A549 (cell line): ENCODE measurements at regions of chr19 and their contacts with region 1.

Region 1: DNA sequence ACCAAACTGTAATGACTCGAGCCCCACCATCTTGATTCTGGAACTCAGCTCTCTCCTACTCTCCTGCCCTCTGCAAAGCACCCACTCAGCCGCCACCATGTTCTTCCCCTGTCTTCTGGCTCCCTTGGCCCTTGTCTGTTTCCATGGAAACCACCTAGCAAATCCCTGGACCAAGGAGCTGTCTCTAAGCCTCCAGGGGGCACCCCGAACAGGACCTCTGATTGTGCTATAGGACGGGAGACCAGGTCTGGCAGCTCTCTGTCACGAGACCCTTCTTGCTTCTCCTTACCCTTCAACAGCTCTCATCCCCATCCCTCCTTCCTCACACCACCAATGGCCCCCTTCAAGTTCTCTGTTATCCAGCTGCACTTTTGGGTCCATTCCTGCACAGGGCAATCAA is 277.7 kb upstream of the ZNF507 start:
- DNase-seq: peak in 1 of 2 experiments; percentile 9
- ATAC-seq: peak in 1 of 2 experiments; percentile 50; a peak in 3 of 6 replicates
- H3K4me3 ChIP-seq: no peak overlapping the region
- H3K27ac ChIP-seq: no peak overlapping the region
- H3K4me1 ChIP-seq: no peaks in the 10 kb centered on the region
- CTCF ChIP-seq: no peak
- EP300 ChIP-seq: no peak
- POLR2A ChIP-seq: no peak
- RAD21 ChIP-seq: no peak

Region 2: DNA sequence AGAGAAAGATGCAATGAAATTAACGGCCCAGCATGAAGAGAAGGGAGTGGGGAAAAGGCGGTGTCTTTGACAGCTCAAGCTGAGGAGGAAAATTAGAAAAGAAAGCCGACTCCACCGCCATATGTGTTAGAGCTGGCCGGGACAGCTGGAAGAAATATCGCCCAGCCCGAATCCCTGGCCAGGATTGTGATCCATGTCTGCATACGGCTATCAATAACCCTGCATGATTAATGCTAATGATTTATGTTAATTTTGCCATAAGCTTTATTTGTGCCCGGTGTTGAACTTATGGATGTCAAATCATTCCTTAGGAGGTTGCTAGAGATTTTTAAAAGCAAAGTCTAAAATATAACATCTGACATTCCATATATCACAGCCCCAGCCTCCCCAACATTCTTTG is 14.3 kb after region 1 on chr19:
- CTCF ChIA-PET with region 1: interaction called, 14 read pairs
- POLR2A ChIA-PET with region 1: no interaction called
- DNase-seq: no peak
- ATAC-seq: no peak
- H3K4me3 ChIP-seq: no peak overlapping the region
- H3K27ac ChIP-seq: no peak overlapping the region
- H3K4me1 ChIP-seq: no peaks in the 10 kb centered on the region
- CTCF ChIP-seq: no peak
- EP300 ChIP-seq: no peak
- POLR2A ChIP-seq: no peak
- RAD21 ChIP-seq: no peak